Activated CD4-positive, alpha-beta memory T cell treated with anti-CD3 and anti-CD28 coated beads, Interleukin-2, amount 10 ng/mL, durations not matched to agents 7 days and 5 days (primary cell): ENCODE measurements at regions of chr18 and their contacts with region 1.

Region 1: DNA sequence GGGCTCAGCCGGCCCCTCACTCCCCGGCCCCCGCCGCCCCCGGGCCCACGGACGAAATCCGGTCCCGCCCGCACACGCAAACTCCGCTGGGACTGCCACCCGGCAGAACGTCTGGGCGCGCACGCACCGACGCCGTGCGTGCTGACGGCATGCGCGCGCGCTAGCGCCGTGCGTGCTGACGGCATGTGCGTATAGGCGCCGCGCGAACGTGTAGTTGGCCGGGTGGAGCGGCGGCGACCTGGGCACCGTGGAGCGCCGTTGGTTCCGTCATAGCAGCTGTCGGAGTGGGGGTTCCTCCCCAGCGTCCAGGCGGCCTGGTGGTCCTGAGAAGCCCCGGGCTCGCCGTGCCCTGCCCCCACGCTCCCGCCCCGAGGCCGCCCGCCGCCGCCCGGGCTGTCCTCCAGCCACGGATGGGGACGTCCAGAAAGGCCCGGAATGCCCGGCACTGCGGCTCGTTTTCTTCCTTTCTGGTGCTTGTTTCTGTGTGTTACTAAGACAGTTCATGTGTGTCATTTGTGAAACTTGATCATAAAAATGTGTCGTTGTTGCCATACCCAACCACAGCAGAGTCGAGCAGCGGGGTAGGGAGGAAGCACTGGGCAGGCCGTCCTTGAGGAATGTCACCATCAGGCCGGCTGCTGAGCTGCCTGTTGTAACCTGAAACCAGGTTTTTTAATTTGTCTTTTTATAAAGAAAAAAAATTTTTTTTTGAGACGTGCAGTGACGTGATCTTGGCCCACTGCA is at the start of gene TXNL4A:
- DNase-seq: peak; percentile 88
- H3K4me3 Mint-ChIP-seq: peak within 1 kb of the TSS; percentile 92
- H3K27ac Mint-ChIP-seq: peak within 1 kb of the TSS; percentile 88
- H3K4me1 Mint-ChIP-seq: peaks cover 41% of the 10 kb centered on the region
- H3K27me3 Mint-ChIP-seq: no peaks in the 10 kb centered on the region
- total RNA-seq, gene TXNL4A: 120 TPM

Region 2: DNA sequence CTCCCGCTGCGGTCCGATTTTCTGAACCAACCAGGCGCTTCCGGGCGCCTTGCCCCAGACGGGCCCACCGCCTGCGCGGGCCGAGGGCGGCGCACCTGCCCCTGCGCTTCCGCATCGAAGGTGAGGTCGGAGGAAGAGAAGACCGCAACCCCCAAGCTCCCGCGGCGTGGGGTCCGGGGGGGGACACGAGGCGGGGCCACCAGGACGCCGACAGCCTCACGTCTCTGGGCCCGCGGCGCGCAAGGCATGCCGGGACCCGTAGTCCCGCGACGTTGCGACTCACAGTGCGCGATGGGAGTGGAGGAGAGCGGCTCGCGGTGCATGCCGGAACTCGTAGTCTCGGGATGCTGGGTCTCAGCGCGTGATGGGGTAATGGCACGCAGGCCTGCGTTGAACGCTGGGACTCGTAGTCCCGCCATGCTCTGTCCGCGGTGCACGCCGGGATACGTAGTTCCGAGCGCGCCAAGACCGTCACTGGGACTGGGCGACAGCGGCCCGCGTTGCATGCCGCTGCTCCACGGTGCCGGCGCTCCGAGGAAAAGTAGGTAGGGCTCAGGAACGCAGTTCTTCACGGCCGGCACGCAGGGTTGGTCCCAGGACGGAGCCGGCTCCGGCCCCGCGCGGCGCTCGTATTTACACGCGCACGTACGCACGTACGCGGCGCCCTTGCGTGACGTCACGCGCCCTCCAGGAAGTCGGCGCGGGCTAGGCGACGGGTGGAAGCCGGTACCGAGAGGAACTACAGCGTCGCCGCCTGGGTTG is 309.3 kb before region 1 on chr18 and contains the start of gene CTDP1:
- CTCF ChIA-PET with region 1: no interaction called
- POLR2A ChIA-PET with region 1: interaction called, 10 read pairs
- DNase-seq: peak; percentile 99
- H3K4me3 Mint-ChIP-seq: peak within 1 kb of the TSS; percentile 94
- H3K27ac Mint-ChIP-seq: peak within 1 kb of the TSS; percentile 96
- H3K4me1 Mint-ChIP-seq: peaks cover 53% of the 10 kb centered on the region
- H3K27me3 Mint-ChIP-seq: no peaks in the 10 kb centered on the region
- total RNA-seq, gene CTDP1: 34.8 to 38.0 TPM

Region 3: DNA sequence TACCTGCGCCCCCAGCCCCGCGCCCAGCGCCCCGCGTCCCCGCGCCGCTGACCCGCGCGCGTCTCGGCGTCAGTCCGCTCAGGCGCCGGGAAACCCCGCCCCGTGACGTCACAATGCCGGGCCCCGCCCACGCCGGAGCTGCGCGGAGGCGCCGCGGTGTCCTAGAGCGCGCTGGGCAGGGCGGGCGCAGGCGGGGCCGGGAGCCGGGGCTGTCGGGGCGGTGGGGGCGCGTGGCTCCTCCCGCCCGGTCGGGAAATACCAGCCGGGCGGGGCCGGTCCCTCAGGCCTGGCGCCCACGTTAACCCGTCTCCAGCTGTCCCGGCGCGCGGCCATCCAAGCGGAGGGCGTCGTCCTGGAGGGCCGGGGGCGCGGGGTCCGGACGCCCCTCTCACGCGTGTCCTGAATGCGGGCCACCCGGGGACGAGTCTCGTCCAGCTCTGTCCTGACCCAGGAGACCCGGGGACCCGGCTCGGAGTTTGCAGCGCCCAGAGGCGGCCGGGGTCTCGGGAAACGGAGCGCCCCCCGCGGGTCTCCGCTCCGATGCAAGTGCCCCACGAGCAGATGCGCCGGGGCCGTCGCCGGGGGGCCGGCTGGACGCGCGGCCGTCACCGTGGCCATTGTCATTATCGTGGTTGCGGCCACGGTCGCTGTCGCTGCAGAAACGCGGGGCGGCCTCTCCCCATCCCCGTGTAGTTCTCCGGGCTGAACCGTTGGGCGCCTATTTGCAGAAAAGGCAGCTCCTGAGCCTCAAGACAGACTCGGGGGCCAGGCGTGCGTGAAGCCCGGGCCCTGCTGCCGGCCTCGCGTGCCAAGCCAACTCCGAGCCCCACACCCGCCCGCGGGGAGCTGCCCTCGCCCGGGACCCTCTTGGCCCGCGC is 36.8 kb before region 1 on chr18 and contains the start of gene SLC66A2:
- CTCF ChIA-PET with region 1: interaction called, 10 read pairs
- POLR2A ChIA-PET with region 1: interaction called, 34 read pairs
- DNase-seq: peak; percentile 94
- H3K4me3 Mint-ChIP-seq: peak within 1 kb of the TSS; percentile 82
- H3K27ac Mint-ChIP-seq: peak within 1 kb of the TSS; percentile 42
- H3K4me1 Mint-ChIP-seq: peaks cover 23% of the 10 kb centered on the region
- H3K27me3 Mint-ChIP-seq: peaks cover 15% of the 10 kb centered on the region
- total RNA-seq, gene SLC66A2: 28.6 to 32.0 TPM

Region 4: DNA sequence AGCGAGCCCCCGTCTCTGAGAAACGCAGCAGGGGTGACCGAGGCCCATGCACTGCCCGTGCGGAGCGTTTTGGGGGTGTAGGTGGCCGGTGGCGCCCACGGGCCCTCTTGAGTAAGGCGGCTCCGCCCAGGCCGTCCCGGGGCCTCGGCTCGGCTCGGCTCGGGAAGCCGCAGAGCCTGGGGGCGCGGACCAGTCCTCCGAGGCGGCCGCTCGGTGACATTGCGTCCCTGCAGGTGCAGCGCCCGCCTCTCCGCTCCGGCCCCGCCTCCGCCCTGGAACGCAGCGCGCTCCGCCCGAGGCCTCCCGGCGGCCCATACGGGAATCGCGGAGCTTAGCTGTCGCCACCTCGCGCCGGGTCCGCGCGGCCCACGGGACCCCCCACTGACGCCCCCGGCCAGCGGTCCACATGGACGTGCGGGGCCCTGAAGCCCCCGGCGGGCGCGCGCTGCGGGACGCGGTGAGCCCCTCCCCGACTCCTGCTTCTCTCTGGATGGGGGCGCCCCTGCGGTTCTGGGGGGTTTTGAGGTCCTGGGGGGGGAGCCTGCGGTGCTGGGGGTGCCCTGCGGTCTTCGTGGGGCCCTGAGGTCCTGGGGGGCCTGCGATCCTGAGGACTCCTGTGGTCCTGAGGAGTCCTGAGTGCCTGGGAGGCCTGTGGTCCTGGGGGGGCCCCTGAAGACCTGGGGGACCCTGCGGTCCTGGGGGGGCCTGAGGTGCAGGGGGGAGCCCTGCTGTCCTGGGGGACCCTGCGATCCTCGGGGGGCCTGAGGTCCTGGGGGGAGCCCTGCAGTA is 24.1 kb before region 1 on chr18 and contains the start of gene HSBP1L1:
- CTCF ChIA-PET with region 1: interaction called, 7 read pairs
- POLR2A ChIA-PET with region 1: interaction called, 17 read pairs
- DNase-seq: peak; percentile 68
- H3K4me3 Mint-ChIP-seq: peak within 1 kb of the TSS; percentile 69
- H3K27ac Mint-ChIP-seq: peak within 1 kb of the TSS; percentile 76
- H3K4me1 Mint-ChIP-seq: peaks cover 50% of the 10 kb centered on the region
- H3K27me3 Mint-ChIP-seq: peaks cover 6% of the 10 kb centered on the region
- total RNA-seq, gene HSBP1L1: 9.0 to 9.2 TPM

Region 5: GRCh38 chr18:79975985-79976680 is 12.5 kb before region 1 on chr18:
- CTCF ChIA-PET with region 1: no interaction called
- POLR2A ChIA-PET with region 1: no interaction called
- DNase-seq: no peak
- H3K4me3 Mint-ChIP-seq: no peak overlapping the region
- H3K27ac Mint-ChIP-seq: no peak overlapping the region
- H3K4me1 Mint-ChIP-seq: peaks cover 19% of the 10 kb centered on the region
- H3K27me3 Mint-ChIP-seq: no peaks in the 10 kb centered on the region

Region 6: DNA sequence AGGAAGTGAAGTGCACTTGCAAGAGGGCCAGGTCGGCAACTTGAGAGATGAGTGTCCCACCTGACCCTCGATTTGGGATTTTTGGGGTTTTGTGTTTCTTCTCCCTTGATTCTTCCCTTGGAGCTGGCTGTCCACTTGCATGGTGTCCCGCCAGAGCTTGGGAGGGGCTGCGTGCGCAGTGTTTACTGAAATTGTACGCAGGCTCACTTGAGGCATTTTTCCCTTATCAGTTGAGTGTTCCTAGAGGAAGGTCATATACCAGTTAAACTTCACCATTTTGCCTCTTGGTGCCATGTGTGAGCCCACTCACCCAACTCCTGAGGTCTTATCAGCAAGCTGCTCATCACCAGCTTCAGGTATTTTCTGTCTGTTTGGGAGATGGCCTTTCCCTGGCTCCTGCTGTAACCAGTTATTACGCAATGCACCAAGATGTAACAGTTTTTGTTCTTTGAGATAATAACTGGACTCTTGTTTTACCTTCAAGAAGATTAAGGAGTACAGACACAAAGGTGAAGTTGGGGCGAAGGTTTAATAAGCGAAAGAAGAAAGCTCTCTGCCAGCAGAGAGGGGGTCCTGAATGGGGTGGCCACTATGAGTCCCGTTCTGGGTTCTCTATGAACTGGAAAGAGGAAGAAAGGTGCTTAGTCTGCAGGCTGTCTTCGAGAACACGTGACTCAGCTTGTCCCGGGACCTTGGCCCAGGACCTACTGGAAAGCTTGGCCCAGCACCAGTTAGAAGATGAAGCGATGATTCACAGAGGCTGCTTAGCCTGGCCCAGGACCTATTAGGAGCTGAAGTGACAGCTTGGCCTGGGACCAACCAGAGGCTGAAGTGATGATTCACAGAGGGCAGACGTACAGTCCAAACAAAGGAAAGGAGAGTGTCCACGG is 21.3 kb after region 1 on chr18:
- CTCF ChIA-PET with region 1: no interaction called
- POLR2A ChIA-PET with region 1: no interaction called
- DNase-seq: no peak
- H3K4me3 Mint-ChIP-seq: no peak overlapping the region
- H3K27ac Mint-ChIP-seq: no peak overlapping the region
- H3K4me1 Mint-ChIP-seq: no peaks in the 10 kb centered on the region
- H3K27me3 Mint-ChIP-seq: no peaks in the 10 kb centered on the region

Region 7: GRCh38 chr18:80034068-80034851 is 45.6 kb after region 1 on chr18 and contains the start of gene RBFA:
- CTCF ChIA-PET with region 1: interaction called, 4 read pairs
- POLR2A ChIA-PET with region 1: interaction called, 33 read pairs
- DNase-seq: peak; percentile 99
- H3K4me3 Mint-ChIP-seq: peak within 1 kb of the TSS; percentile 83
- H3K27ac Mint-ChIP-seq: peak within 1 kb of the TSS; percentile 82
- H3K4me1 Mint-ChIP-seq: peaks cover 28% of the 10 kb centered on the region
- H3K27me3 Mint-ChIP-seq: no peaks in the 10 kb centered on the region
- total RNA-seq, gene RBFA: 13.9 to 16.8 TPM

Region 8: GRCh38 chr18:80108728-80109675 is 120.4 kb after region 1 on chr18 and contains the start of gene ADNP2:
- CTCF ChIA-PET with region 1: no interaction called
- POLR2A ChIA-PET with region 1: interaction called, 20 read pairs
- DNase-seq: peak; percentile 88
- H3K4me3 Mint-ChIP-seq: peak within 1 kb of the TSS; percentile 80
- H3K27ac Mint-ChIP-seq: peak within 1 kb of the TSS; percentile 79
- H3K4me1 Mint-ChIP-seq: peaks cover 32% of the 10 kb centered on the region
- H3K27me3 Mint-ChIP-seq: no peaks in the 10 kb centered on the region
- total RNA-seq, gene ADNP2: 25.8 to 26.6 TPM